CD14-positive monocyte (primary cell): ENCODE measurements at regions of chr1 and their contacts with region 1.

Region 1: DNA sequence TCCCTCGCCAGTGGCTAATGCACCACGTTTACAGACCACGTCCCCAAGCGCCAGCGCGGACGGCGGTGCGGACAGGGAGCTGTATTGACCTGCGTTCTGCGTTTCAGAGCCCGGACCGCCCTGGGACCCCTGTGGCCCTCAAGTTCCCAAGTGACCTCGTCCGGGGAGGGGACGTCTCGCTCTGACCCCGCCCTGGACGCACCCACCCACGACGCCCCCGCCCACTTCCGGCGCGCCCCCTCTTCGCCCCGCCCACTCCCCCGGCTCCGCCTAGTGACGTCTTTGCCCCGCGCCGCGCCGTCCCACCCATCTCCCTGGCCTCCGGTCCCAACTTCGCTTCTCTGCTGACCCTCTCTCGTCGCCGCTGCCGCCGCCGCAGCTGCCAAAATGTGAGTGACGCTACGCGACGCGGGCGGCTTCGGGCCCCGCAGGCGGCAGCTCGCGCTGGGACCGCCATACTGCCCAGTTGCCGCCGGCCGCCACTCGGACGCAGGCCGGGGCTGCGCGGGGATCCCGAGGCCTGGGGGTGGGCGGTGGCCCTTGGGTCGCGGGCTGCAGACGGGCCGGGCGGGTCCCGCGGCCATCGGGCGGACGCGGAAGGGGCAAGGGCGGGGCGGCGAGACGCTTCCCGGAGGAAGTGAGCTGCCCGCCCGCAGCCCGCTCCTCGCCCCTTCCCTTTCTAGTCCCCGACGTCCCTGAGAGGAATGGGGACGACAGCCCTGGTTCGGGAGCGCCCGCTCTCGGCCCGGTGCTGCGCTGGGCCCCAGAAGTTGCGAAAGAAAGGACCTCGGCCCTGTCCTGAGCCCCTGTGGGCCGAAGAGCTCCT is at the start of gene VAMP3:
- DNase-seq: peak; percentile 73 to 90 (median 85)
- H3K4me3 ChIP-seq: peak within 1 kb of the TSS; percentile 72 to 94 (median 91)
- H3K4me3 Mint-ChIP-seq: peak within 1 kb of the TSS; percentile 88 to 92
- H3K27ac ChIP-seq: peak within 1 kb of the TSS; percentile 94 to 99
- H3K27ac Mint-ChIP-seq: peak within 1 kb of the TSS; percentile 98 to 100 (median 99)
- H3K4me1 ChIP-seq: peaks cover 39 to 47% of the 10 kb centered on the region in 2 donors
- H3K4me1 Mint-ChIP-seq: peaks cover 51% of the 10 kb centered on the region
- H3K27me3 ChIP-seq: no peaks in the 10 kb centered on the region
- H3K27me3 Mint-ChIP-seq: no peaks in the 10 kb centered on the region
- CTCF ChIP-seq: no peak
- polyA plus RNA-seq, gene VAMP3: 106 to 149 (median 138) TPM

Region 2: GRCh38 chr1:7726623-7727022 is 44.6 kb before region 1 on chr1:
- intact Hi-C with region 1: no loop called
- DNase-seq: no peak
- H3K4me3 ChIP-seq: no peak overlapping the region
- H3K4me3 Mint-ChIP-seq: no peak overlapping the region
- H3K27ac ChIP-seq: no peak overlapping the region
- H3K27ac Mint-ChIP-seq: no peak overlapping the region
- H3K4me1 ChIP-seq: peaks cover 21 to 23% of the 10 kb centered on the region in 2 donors
- H3K4me1 Mint-ChIP-seq: peaks cover 32% of the 10 kb centered on the region
- H3K27me3 ChIP-seq: no peaks in the 10 kb centered on the region
- H3K27me3 Mint-ChIP-seq: peaks cover 0 to 3% (median 1%) of the 10 kb centered on the region in 3 donors
- CTCF ChIP-seq: no peak

Region 3: GRCh38 chr1:7961216-7962015 is 190.2 kb after region 1 on chr1 and contains the start of gene PARK7:
- intact Hi-C with region 1: loop called in 1 of 2 experiments (anchors 10 kb)
- DNase-seq: peak; percentile 99 to 100 (median 99)
- H3K4me3 ChIP-seq: peak within 1 kb of the TSS; percentile 54 to 93 (median 76)
- H3K4me3 Mint-ChIP-seq: peak within 1 kb of the TSS; percentile 96 to 99
- H3K27ac ChIP-seq: peak within 1 kb of the TSS; percentile 88 to 96
- H3K27ac Mint-ChIP-seq: peak within 1 kb of the TSS; percentile 95 to 99 (median 98)
- H3K4me1 ChIP-seq: peaks cover 25 to 29% of the 10 kb centered on the region in 2 donors
- H3K4me1 Mint-ChIP-seq: peaks cover 22% of the 10 kb centered on the region
- H3K27me3 ChIP-seq: no peaks in the 10 kb centered on the region
- H3K27me3 Mint-ChIP-seq: peaks cover 0 to 3% (median 0%) of the 10 kb centered on the region in 3 donors
- CTCF ChIP-seq: peak; percentile 44
- polyA plus RNA-seq, gene PARK7: 116 to 391 (median 353) TPM